ENCODE measurements at regions of chr1 and their contacts with region 1.

Region 1: DNA sequence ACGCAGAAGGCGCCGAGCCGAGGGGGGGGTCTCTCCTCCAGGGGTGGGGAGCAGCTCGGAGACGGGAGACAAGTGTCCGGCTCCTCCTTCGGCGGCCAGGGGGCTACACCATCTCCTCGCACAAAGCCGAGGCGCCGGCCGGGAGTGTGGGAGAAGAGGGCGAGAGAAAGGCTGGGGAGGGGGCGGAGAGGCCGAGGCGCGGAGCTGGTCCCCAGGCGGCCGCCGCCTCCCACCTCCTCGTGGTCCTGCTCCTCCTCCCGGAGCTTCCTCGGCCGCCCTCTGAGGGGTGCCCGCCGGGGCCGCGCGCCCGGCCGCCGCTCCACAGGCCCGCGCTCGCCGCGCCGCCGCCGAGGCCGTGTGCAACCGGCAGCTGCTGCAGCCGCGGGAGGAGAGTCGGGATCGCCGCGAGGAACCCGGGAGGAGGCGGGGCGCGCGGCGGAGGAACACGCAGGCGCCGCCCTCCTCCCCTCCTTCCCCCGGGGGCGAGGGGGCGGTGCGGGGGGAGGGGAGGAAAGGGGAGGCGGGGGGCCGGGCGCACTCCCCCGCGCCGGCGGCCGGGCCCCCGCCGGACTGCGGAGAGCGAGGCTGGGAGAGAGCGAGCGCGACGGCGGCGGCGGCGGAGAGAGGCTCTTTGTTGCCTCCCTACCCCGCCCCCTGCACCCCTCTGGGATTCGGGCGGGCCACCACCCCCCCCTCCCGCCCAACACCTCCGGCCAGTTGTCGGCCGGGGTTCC is at the start of gene ENAH:
- DNase-seq: peak; percentile 87 to 90
- ATAC-seq: peak; percentile 71 to 77 (median 74)
- H3K4me3 ChIP-seq: peak within 1 kb of the TSS; percentile 85
- H3K27ac ChIP-seq: peak within 1 kb of the TSS; percentile 99
- H3K4me1 ChIP-seq: peaks cover 53% of the 10 kb centered on the region
- H3K27me3 ChIP-seq: no peaks in the 10 kb centered on the region
- CTCF ChIP-seq: no peak
- total RNA-seq, gene ENAH: 119 to 262 (median 177) TPM

Region 2: DNA sequence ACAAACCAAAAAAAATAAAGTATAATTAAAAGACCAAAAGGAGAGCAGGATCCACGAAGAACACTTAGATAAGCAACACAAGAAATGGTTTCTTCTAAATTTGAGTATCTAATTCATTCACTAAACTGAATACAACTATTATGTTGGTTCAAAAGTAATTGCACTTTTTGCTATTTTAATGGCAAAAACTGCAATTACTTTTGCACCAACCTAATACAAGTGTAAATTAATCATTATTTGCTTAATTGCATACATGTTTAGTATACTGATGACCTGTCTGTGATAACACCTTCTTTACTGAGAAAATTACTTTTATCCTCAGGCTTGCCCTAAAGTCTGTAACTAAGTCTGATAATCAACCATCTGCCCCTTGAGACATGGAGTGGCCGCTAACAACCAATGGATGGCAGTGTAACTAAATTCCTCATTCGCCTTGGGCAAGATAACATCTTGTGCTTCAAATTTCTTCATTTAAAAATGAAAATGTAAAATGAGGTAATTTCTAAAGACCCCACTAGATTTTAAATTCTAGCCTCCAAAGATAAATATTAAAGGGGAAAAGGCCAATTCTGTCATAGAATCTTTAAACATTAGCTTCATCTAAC is 85.2 kb before region 1 on chr1:
- intact Hi-C with region 1: no loop called
- DNase-seq: no peak
- ATAC-seq: no peak
- H3K4me3 ChIP-seq: no peak overlapping the region
- H3K27ac ChIP-seq: no peak overlapping the region
- H3K4me1 ChIP-seq: peaks cover 10% of the 10 kb centered on the region
- H3K27me3 ChIP-seq: no peaks in the 10 kb centered on the region
- CTCF ChIP-seq: no peak

Region 3: GRCh38 chr1:225597926-225598575 is 54.8 kb before region 1 on chr1:
- intact Hi-C with region 1: loop called in 1 of 2 experiments (anchors 10 kb)
- DNase-seq: no peak
- ATAC-seq: no peak
- H3K4me3 ChIP-seq: no peak overlapping the region
- H3K27ac ChIP-seq: peak overlapping the region; percentile 8
- H3K4me1 ChIP-seq: peaks cover 54% of the 10 kb centered on the region
- H3K27me3 ChIP-seq: no peaks in the 10 kb centered on the region
- CTCF ChIP-seq: no peak

Region 4: DNA sequence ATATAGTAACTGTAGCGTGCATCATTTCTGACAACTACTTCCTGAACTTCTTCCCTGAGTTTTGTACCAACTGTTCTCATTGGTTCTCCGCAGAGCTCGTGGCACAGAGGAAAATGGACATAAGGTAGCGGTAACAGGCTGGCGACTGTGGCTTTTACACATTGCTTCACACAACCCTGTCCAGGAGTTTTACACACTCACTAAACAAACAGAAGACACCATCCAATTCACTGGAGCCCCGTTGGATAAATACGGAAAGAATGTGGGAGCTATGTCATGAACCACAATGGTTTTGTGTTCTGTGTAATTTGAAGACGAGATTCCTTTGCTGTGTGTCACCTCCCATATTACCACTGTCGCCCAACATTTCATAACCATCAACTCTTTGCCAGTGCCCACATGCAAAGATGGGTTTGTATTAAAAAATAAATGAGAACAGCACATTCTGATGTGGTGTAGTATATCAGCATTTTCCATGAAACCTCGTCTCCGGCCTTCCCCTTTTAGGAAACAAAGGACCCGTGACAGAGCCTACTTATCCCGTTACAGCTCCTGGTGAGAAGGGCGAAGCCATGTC is 47.4 kb after region 1 on chr1:
- intact Hi-C with region 1: loop called (anchors 2 kb)
- DNase-seq: no peak
- ATAC-seq: peak; percentile 87 to 91 (median 90)
- H3K4me3 ChIP-seq: peak overlapping the region; percentile 62
- H3K27ac ChIP-seq: peak overlapping the region; percentile 86
- H3K4me1 ChIP-seq: peaks cover 32% of the 10 kb centered on the region
- H3K27me3 ChIP-seq: no peaks in the 10 kb centered on the region
- CTCF ChIP-seq: no peak

Region 5: GRCh38 chr1:225772323-225772768 is 119.5 kb after region 1 on chr1:
- intact Hi-C with region 1: loop called (anchors 5 kb)
- DNase-seq: peak; percentile 80 to 89
- ATAC-seq: peak; percentile 90 to 93 (median 90)
- H3K4me3 ChIP-seq: no peak overlapping the region
- H3K27ac ChIP-seq: peak overlapping the region; percentile 5
- H3K4me1 ChIP-seq: peaks cover 31% of the 10 kb centered on the region
- H3K27me3 ChIP-seq: no peaks in the 10 kb centered on the region
- CTCF ChIP-seq: peak; percentile 87

Region 6: GRCh38 chr1:225817611-225818061 is 164.7 kb after region 1 on chr1:
- intact Hi-C with region 1: loop called in 1 of 2 experiments (anchors 5 kb)
- DNase-seq: peak; percentile 80 to 84
- ATAC-seq: peak; percentile 84 to 86 (median 85)
- H3K4me3 ChIP-seq: peak overlapping the region; percentile 35
- H3K27ac ChIP-seq: peak overlapping the region; percentile 90
- H3K4me1 ChIP-seq: peaks cover 73% of the 10 kb centered on the region
- H3K27me3 ChIP-seq: no peaks in the 10 kb centered on the region
- CTCF ChIP-seq: no peak